ENCODE measurements at regions of chr6 and their contacts with region 1.

Region 1: DNA sequence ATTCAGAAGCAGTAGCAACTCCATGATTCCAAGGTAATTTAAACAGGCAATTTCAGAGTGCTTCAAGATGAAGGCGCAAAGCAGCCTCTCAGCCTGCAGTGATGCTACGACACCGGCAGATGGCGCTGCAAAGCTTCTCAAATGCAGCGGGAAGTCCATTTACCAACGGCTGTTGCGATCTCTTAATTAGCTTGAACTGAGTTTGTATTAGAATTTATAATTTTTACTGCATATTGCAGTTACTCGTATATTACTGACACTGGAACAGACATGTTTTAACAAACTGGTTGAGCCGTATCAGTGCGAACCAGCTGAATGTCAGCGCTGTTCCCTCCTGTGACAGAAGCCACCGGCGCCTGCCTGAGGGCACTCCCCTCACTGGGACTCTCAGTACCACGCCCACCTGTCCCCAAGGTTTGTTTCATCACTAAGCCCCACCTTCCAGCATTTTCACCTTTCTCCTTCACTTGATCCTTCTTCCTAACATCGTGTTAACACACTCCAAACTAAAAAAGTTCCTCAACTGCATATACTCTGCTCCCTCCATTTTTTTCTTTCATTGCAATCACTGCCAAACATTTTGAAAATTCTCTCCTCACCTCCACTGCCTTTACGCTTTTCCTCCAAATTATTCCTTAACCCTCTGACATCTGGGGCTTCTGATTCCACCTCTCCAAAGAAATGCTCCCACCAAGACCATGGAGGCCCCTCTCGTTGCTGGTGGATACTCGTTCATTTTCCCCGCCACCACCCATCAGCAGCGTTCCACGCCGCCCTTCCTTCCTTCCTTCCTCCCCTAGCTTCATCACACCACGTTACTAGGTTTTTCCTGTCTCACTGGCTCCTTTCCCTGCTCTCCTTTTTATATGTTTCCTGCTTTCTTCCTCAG is 14.5 kb downstream of the GNL1 start:
- DNase-seq: peak; percentile 65 to 71
- H3K4me3 ChIP-seq: peak overlapping the region; percentile 15 to 53 (median 35)
- H3K27ac ChIP-seq: no peak overlapping the region
- H3K4me1 ChIP-seq: no peaks in the 10 kb centered on the region
- H3K27me3 ChIP-seq: no peaks in the 10 kb centered on the region
- CTCF ChIP-seq: peak; percentile 86 to 92 (median 90)
- POLR2A ChIP-seq: no peak

Region 2: DNA sequence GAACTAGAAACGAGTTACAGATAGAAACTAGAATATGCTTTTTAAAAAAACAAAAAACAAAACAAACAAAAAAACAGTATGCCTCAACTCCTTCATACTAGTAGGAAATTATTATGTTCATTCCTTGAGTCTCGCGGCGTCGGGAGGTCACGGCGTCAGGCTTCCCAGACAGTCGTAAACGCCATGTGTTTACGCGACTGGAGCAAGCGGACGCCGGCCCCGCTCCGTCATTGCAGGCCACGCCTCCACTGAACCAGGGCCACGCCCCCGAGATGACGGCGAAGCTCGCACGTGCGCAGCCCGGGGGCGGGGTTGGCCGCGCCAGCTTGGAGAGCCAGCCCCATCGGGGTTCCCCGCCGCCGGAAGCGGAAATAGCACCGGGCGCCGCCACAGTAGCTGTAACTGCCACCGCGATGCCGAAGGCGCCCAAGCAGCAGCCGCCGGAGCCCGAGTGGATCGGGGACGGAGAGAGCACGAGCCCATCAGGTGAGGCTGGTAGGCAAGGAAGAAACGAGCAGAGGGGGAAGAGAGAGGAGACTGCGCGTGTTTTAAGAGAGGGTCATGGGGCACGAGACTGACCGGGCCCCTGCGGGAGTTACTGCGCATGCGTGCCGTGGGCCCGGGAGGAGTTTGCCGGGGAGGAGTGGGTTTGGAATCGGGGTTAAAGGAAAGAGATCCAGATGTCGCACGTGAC is 29.5 kb after region 1 on chr6 and contains the start of gene ABCF1:
- intact Hi-C with region 1: loop called (anchors 1 kb)
- DNase-seq: peak; percentile 97 to 99
- H3K4me3 ChIP-seq: peak within 1 kb of the TSS; percentile 61 to 84 (median 74)
- H3K27ac ChIP-seq: peak within 1 kb of the TSS; percentile 91 to 94
- H3K4me1 ChIP-seq: peaks cover 3 to 6% of the 10 kb centered on the region in 2 donors
- H3K27me3 ChIP-seq: no peaks in the 10 kb centered on the region
- CTCF ChIP-seq: peak in 1 of 3 donors; percentile 20
- POLR2A ChIP-seq: peak; percentile 79
- total RNA-seq, gene ABCF1: 41.0 to 55.2 (median 51.5) TPM

Region 3: DNA sequence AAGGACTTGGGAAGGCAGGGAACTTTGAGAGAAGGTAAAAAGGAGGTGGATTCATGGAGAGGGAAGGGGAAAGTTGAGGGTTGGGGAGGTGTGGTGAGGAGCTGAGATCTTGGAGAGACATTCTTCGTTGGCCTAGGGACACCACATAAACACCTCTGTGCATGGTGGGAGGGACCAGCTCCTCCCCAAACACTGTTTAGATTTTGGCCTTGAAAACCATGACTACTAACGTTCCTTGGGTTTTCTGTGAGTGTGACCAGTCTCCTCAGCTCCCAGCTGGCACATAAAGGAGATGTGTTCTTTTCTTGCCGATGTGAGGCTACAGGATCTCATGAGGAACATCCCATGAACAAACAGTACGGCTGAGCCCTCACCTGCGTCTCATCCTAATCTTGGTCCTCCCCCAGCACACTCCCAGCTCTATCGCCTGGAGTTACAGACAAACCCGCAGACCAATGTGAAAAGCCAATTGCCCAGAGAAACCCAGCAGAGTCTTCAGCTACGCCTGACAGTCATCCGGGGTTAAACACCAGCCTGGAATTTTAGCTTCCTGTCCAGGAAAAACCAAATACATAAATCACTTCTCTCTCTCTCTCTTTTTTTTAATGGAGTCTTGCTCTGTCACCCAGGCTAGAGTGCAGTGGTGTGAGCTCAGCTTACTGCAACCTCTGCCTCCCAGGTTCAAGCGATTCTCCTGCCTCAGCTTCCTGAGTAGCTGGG is 320.6 kb after region 1 on chr6:
- intact Hi-C with region 1: no loop called
- DNase-seq: no peak
- H3K4me3 ChIP-seq: no peak overlapping the region
- H3K27ac ChIP-seq: no peak overlapping the region
- H3K4me1 ChIP-seq: no peaks in the 10 kb centered on the region
- H3K27me3 ChIP-seq: no peaks in the 10 kb centered on the region
- CTCF ChIP-seq: no peak
- POLR2A ChIP-seq: no peak

Region 4: DNA sequence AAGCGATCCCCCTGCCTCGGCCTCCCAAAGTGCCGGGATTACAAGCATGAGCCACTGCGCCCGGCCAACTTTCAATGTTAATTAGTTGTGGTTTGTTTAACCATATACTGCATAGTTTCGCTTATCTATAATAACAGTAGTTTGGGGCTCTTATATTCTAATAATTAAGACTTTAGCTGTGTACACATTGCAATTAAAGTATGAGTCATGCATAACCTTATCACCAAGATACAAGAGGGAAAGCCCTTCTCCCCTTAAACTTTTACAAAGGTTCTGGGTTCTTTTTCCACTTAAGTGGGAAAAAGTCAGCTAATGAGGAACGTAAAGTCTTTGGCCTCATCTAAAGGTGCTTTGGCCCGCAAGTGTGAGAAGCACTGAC is 983.8 kb after region 1 on chr6:
- intact Hi-C with region 1: no loop called
- DNase-seq: no peak
- H3K4me3 ChIP-seq: no peak overlapping the region
- H3K27ac ChIP-seq: no peak overlapping the region
- H3K4me1 ChIP-seq: no peaks in the 10 kb centered on the region
- H3K27me3 ChIP-seq: no peaks in the 10 kb centered on the region
- CTCF ChIP-seq: no peak
- POLR2A ChIP-seq: no peak

Region 5: GRCh38 chr6:31631681-31632278 is 1090.0 kb after region 1 on chr6:
- intact Hi-C with region 1: no loop called
- DNase-seq: no peak
- H3K4me3 ChIP-seq: no peak overlapping the region
- H3K27ac ChIP-seq: peak overlapping the region in 1 of 2 donors; percentile 55
- H3K4me1 ChIP-seq: no peaks in the 10 kb centered on the region
- H3K27me3 ChIP-seq: no peaks in the 10 kb centered on the region
- CTCF ChIP-seq: no peak
- POLR2A ChIP-seq: no peak

Measured in breast epithelium (tissue), 4 donors.